ENCODE measurements at regions of chr10 and their contacts with region 1.

Region 1: GRCh38 chr10:95601116-95601719 is 40.0 kb upstream of the SORBS1 start:
- DNase-seq: peak in 1 of 2 donors; percentile 92
- H3K4me3 ChIP-seq: no peak overlapping the region
- H3K27ac ChIP-seq: peak overlapping the region; percentile 10 to 23
- H3K4me1 ChIP-seq: peaks cover 6 to 25% of the 10 kb centered on the region in 2 donors
- H3K27me3 ChIP-seq: no peaks in the 10 kb centered on the region
- CTCF ChIP-seq: peak; percentile 89 to 93 (median 89)

Region 2: DNA sequence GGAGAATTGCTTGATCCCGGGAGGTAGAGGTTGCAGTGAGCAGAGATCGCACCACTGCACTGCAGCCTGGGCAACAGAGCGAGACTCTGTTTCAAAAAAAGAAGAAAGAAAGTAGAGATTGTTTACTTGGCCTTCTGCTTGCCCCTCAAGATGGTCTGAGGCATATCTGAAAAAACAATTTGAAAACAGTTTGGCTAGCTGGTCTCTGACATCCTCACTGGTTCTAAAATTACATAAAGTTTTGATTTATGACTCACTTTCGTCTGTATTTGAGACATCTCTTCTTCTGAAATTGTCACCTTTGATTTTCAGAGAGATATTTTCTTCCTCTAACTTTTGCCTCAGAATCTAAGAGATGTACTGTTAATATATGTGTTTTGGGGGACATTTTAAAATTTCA is 1105.2 kb before region 1 on chr10:
- intact Hi-C with region 1: no loop called
- DNase-seq: no peak
- H3K4me3 ChIP-seq: no peak overlapping the region
- H3K27ac ChIP-seq: no peak overlapping the region
- H3K4me1 ChIP-seq: no peaks in the 10 kb centered on the region
- H3K27me3 ChIP-seq: no peaks in the 10 kb centered on the region
- CTCF ChIP-seq: no peak

Region 3: GRCh38 chr10:95183271-95184230 is 417.7 kb before region 1 on chr10:
- intact Hi-C with region 1: no loop called
- DNase-seq: peak in 1 of 2 donors; percentile 92
- H3K4me3 ChIP-seq: peak overlapping the region; percentile 75 to 79
- H3K27ac ChIP-seq: peak overlapping the region; percentile 81 to 85
- H3K4me1 ChIP-seq: no peaks in the 10 kb centered on the region
- H3K27me3 ChIP-seq: no peaks in the 10 kb centered on the region
- CTCF ChIP-seq: peak; percentile 91 to 95 (median 93)

Region 4: GRCh38 chr10:95430231-95430951 is 170.8 kb before region 1 on chr10:
- intact Hi-C with region 1: loop called (anchors 1 kb)
- DNase-seq: peak in 1 of 2 donors; percentile 70
- H3K4me3 ChIP-seq: no peak overlapping the region
- H3K27ac ChIP-seq: peak overlapping the region; percentile 93 to 96
- H3K4me1 ChIP-seq: peaks cover 19 to 80% of the 10 kb centered on the region in 2 donors
- H3K27me3 ChIP-seq: no peaks in the 10 kb centered on the region
- CTCF ChIP-seq: peak; percentile 88 to 91 (median 90)

Region 5: GRCh38 chr10:95525033-95525418 is 76.2 kb before region 1 on chr10:
- intact Hi-C with region 1: loop called (anchors 5 kb)
- DNase-seq: no peak
- H3K4me3 ChIP-seq: peak overlapping the region in 1 of 2 donors; percentile 40
- H3K27ac ChIP-seq: peak overlapping the region; percentile 3 to 42
- H3K4me1 ChIP-seq: peaks cover 28 to 70% of the 10 kb centered on the region in 2 donors
- H3K27me3 ChIP-seq: no peaks in the 10 kb centered on the region
- CTCF ChIP-seq: no peak

Region 6: GRCh38 chr10:95935429-95935828 is 334.2 kb after region 1 on chr10:
- intact Hi-C with region 1: no loop called
- DNase-seq: no peak
- H3K4me3 ChIP-seq: no peak overlapping the region
- H3K27ac ChIP-seq: no peak overlapping the region
- H3K4me1 ChIP-seq: no peaks in the 10 kb centered on the region
- H3K27me3 ChIP-seq: no peaks in the 10 kb centered on the region
- CTCF ChIP-seq: no peak

Measured in ascending aorta (tissue), 2 donors.